Esophagus squamous epithelium (tissue), 5 donors: ENCODE measurements at regions of chr7 and their contacts with region 1.

Region 1: GRCh38 chr7:130887182-130888016 is 153.4 kb upstream of the KLF14 start:
- DNase-seq: no peak
- H3K4me3 ChIP-seq: no peak overlapping the region
- H3K27ac ChIP-seq: peak overlapping the region; percentile 64 to 86 (median 76)
- H3K4me1 ChIP-seq: peaks cover 35 to 93% (median 71%) of the 10 kb centered on the region in 3 donors
- H3K27me3 ChIP-seq: no peaks in the 10 kb centered on the region
- CTCF ChIP-seq: no peak
- POLR2A ChIP-seq: no peak

Region 2: DNA sequence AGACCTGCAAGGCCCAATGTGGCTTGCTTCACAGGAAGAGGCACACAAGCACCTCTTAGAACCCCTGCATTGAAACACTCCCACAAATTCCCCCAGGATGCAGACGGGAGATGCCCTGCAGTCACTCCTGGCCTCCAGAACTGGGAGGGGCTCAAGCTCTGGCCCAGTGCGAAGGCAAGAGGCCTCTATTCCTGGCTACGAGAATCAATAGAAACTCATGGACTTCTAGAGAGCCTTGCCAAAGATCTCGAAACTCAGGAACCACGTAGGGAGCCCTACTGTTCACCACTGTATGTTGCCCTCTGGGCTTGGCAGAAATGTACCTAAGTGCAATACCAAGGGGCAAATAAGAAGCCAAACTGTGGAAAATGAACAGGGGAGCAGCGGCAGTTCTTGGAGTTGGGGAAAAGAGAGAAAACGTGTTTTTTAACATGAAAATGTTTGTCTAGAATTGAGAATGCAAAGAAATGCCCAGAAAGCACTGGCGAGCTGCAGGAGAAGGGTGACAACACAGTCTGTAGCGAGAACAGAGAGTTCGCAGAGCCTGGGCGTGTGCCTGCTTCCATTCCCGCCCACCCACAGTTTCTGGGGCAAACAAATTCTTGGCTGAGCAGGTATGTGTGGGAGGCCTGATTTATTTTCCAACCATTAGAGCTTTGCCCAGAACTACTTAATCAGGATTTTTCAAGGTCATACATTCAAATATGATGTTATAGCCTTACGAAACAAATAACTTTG is 107.1 kb after region 1 on chr7:
- intact Hi-C with region 1: loop called (anchors 5 kb)
- DNase-seq: no peak
- H3K4me3 ChIP-seq: peak overlapping the region in 1 of 4 donors; percentile 18
- H3K27ac ChIP-seq: peak overlapping the region; percentile 85 to 88 (median 86)
- H3K4me1 ChIP-seq: peaks cover 47 to 100% (median 85%) of the 10 kb centered on the region in 3 donors
- H3K27me3 ChIP-seq: no peaks in the 10 kb centered on the region
- CTCF ChIP-seq: no peak
- POLR2A ChIP-seq: peak in 1 of 4 donors; percentile 15

Region 3: DNA sequence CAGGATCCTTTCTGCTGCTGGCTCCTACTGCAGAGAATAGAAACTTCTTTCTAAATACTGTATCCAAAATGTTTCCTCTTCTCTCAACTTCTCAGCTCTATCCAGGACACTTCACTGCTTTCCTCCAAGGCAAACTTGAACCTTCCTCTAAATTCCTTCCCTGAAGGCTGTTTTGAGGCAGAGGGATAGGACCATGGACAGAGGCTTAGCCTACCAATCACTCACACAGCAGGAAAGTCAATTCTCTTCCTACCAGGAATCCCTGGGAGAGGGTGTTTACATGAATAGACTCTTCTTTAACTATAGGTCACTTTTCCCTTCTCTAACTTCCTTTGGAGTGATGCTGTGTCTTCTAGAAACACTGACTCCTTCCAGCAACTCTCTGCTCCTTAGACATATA is 324.7 kb after region 1 on chr7:
- intact Hi-C with region 1: no loop called
- DNase-seq: no peak
- H3K4me3 ChIP-seq: no peak overlapping the region
- H3K27ac ChIP-seq: no peak overlapping the region
- H3K4me1 ChIP-seq: no peaks in the 10 kb centered on the region
- H3K27me3 ChIP-seq: no peaks in the 10 kb centered on the region
- CTCF ChIP-seq: no peak
- POLR2A ChIP-seq: no peak